Gastrocnemius medialis (tissue), 4 donors: ENCODE measurements at regions of chr6 and their contacts with region 1.

Region 1: DNA sequence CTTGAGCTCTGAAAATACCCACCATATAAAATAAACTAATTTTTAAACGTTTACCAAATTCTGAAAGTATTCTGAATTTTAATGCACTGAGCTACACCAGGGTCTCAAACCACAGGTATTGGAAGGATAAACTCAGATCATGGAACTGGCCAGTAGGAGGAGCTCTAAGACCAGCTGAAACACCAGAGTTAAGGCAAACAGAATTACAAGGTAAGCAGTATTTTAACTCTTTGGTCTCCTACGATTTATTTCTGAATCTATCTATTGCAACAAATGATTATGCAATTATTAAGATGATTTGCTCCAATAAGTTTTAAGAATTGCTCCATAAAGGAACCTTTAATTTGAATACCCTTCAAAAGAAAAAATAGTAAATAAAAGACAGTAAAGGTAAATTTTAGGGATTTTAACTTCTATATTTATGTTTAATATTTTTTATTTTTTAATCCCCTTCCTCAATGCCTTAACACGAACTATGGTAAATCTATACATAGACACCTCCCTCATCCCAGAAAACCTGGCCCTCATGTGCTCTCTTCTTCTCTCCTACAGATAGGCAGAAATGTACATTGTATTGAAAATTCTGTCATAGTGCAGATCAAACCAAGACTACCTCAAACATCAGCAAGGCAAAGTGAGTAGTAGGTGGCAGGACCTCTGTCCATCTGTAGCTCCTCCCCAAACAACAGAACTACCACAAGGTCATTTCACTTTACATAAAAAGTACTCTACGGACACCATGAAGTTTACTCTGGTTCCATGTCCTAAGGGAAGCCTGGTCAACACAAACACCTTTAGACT is 58.4 kb downstream of the SMLR1 start:
- DNase-seq: peak; percentile 43 to 45
- ATAC-seq: peak; percentile 86
- H3K4me3 ChIP-seq: no peak overlapping the region
- H3K27ac ChIP-seq: no peak overlapping the region
- H3K4me1 ChIP-seq: no peaks in the 10 kb centered on the region
- H3K27me3 ChIP-seq: no peaks in the 10 kb centered on the region
- CTCF ChIP-seq: peak; percentile 83 to 91 (median 88)
- POLR2A ChIP-seq: no peak

Region 2: GRCh38 chr6:131029626-131030297 is 144.2 kb after region 1 on chr6:
- in situ Hi-C with region 1: no loop called
- intact Hi-C with region 1: no loop called
- DNase-seq: no peak
- ATAC-seq: no peak
- H3K4me3 ChIP-seq: no peak overlapping the region
- H3K27ac ChIP-seq: peak overlapping the region in 1 of 4 donors; percentile 21
- H3K4me1 ChIP-seq: peaks cover 0 to 14% of the 10 kb centered on the region in 2 donors
- H3K27me3 ChIP-seq: no peaks in the 10 kb centered on the region
- CTCF ChIP-seq: no peak
- POLR2A ChIP-seq: no peak

Region 3: GRCh38 chr6:131063028-131063763 is 177.6 kb after region 1 on chr6 and contains the start of gene EPB41L2:
- in situ Hi-C with region 1: no loop called
- intact Hi-C with region 1: loop called (anchors 5 kb)
- DNase-seq: peak; percentile 64 to 74
- ATAC-seq: peak; percentile 87 to 89
- H3K4me3 ChIP-seq: peak within 1 kb of the TSS; percentile 77 to 97 (median 86)
- H3K27ac ChIP-seq: peak within 1 kb of the TSS; percentile 62 to 83 (median 74)
- H3K4me1 ChIP-seq: peaks cover 4 to 5% of the 10 kb centered on the region in 2 donors
- H3K27me3 ChIP-seq: no peaks in the 10 kb centered on the region
- CTCF ChIP-seq: peak in 4 of 5 experiments; percentile 27 to 46 (median 35)
- POLR2A ChIP-seq: peak; percentile 72 to 92
- total RNA-seq, gene EPB41L2: 11.6 to 24.0 (median 14.6) TPM

Region 4: GRCh38 chr6:131116749-131117360 is 231.3 kb after region 1 on chr6:
- in situ Hi-C with region 1: loop called (anchors 5 kb)
- intact Hi-C with region 1: loop called (anchors 1 kb)
- DNase-seq: no peak
- ATAC-seq: no peak
- H3K4me3 ChIP-seq: no peak overlapping the region
- H3K27ac ChIP-seq: no peak overlapping the region
- H3K4me1 ChIP-seq: no peaks in the 10 kb centered on the region
- H3K27me3 ChIP-seq: no peaks in the 10 kb centered on the region
- CTCF ChIP-seq: peak; percentile 21 to 57 (median 39)
- POLR2A ChIP-seq: no peak

Region 5: DNA sequence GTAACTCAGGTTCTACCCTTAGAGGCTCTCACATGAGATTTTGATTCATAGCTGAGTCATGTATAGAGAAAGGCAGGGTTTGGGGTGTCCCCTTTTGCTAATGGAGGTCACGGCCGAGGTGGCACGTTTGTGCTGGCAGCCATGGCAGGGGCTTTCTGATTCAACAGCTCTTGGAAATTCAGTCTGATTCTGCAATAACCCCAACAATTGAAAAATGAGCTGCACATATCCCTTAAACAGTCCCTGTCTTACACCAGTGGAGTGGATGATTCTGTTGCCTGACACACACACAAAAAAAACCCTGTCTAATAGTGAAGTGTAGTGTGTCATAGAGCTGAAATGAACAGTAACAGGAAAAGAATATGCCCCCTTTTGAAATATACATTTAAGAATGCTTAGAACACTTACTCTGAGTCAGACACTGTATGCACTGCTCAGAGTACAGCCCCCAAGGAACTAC is 647.0 kb after region 1 on chr6:
- in situ Hi-C with region 1: loop called in 2 of 4 experiments (anchors 10 to 25 kb)
- intact Hi-C with region 1: loop called (anchors 5 kb)
- DNase-seq: no peak
- ATAC-seq: no peak
- H3K4me3 ChIP-seq: no peak overlapping the region
- H3K27ac ChIP-seq: no peak overlapping the region
- H3K4me1 ChIP-seq: no peaks in the 10 kb centered on the region
- H3K27me3 ChIP-seq: no peaks in the 10 kb centered on the region
- CTCF ChIP-seq: no peak
- POLR2A ChIP-seq: no peak

Region 6: GRCh38 chr6:131627724-131628682 is 742.4 kb after region 1 on chr6 and contains the start of gene MED23:
- in situ Hi-C with region 1: no loop called
- intact Hi-C with region 1: loop called (anchors 1 kb)
- DNase-seq: peak; percentile 88 to 90
- ATAC-seq: peak; percentile 96 to 99
- H3K4me3 ChIP-seq: peak within 1 kb of the TSS; percentile 79 to 91 (median 84)
- H3K27ac ChIP-seq: peak within 1 kb of the TSS; percentile 74 to 87 (median 80)
- H3K4me1 ChIP-seq: peaks cover 16 to 21% of the 10 kb centered on the region in 2 donors
- H3K27me3 ChIP-seq: no peaks in the 10 kb centered on the region
- CTCF ChIP-seq: peak; percentile 77 to 97 (median 86)
- POLR2A ChIP-seq: peak; percentile 21 to 27
- total RNA-seq, gene MED23: 7.5 to 16.0 (median 12.5) TPM